Caco-2 (cell line): ENCODE measurements at regions of chr12 and their contacts with region 1.

Region 1: DNA sequence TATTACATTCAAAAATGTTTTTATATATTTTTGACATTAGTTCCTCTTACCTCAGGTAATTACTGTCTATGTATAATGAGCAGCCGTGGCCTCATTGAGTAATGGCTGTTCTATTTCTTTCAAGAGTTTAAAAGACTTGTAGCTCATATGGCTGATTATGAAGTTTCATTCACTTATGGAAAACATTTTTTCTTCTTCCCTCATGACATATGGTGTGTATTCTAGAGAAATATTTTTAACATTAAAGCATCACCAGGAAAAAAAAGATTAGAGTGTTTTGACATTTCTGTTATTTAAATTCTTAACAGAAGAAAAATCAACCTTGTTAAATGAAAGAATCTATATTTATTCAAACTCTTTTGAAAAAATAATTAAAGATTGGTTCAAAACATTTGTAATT is 422.4 kb downstream of the TMEM117 start:
- DNase-seq: no peak
- H3K4me3 ChIP-seq: no peak overlapping the region
- H3K4me3 Mint-ChIP-seq: no peak overlapping the region
- H3K27ac Mint-ChIP-seq: no peak overlapping the region
- H3K4me1 ChIP-seq: no peaks in the 10 kb centered on the region
- H3K4me1 Mint-ChIP-seq: no peaks in the 10 kb centered on the region
- H3K27me3 ChIP-seq: no peaks in the 10 kb centered on the region
- H3K27me3 Mint-ChIP-seq: no peaks in the 10 kb centered on the region
- CTCF ChIP-seq: no peak

Region 2: DNA sequence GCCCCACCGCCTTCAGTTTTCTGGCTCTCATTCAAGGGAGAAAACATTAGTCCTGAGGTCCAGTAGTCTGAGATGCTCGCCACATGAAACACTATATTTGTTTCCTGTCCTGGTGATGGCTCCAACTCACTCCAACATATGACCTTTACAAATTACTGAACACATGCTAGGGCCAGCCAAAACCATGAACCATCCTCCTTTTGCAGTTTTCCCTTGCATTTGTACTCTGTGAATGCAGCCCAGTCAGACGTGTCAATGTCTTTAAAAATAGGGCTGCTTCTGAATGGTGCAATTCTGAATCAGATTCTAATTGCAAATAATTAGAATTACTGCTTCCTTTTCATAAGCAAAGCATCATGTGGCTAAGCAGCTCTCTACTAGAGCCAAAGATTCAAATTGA is 742.2 kb before region 1 on chr12:
- CTCF ChIA-PET with region 1: no interaction called
- POLR2A ChIA-PET with region 1: no interaction called
- intact Hi-C with region 1: loop called (anchors 5 kb)
- DNase-seq: no peak
- H3K4me3 ChIP-seq: no peak overlapping the region
- H3K4me3 Mint-ChIP-seq: no peak overlapping the region
- H3K27ac Mint-ChIP-seq: no peak overlapping the region
- H3K4me1 ChIP-seq: no peaks in the 10 kb centered on the region
- H3K4me1 Mint-ChIP-seq: no peaks in the 10 kb centered on the region
- H3K27me3 ChIP-seq: no peaks in the 10 kb centered on the region
- H3K27me3 Mint-ChIP-seq: peaks cover under 1% of the 10 kb centered on the region
- CTCF ChIP-seq: no peak

Region 3: DNA sequence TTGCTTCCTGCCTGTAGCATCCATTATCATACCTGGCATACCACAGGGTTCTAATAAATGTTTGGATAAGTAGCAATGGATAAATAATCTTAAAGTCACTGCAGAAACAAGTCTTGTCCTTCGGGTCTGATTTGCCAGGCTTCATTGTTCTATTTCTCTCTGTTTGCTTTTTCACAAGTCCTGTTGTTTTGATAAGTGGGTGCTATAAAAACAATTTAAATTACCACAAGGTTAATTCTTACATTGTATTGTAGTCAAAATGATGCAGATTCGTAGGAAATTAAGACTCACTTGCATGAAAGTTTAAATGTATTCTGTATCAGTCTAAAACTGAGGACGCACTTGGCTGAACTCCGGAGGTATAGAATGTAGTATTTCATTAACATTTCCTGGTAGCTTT is 187.9 kb after region 1 on chr12:
- CTCF ChIA-PET with region 1: no interaction called
- POLR2A ChIA-PET with region 1: no interaction called
- intact Hi-C with region 1: loop called (anchors 5 kb)
- DNase-seq: no peak
- H3K4me3 ChIP-seq: no peak overlapping the region
- H3K4me3 Mint-ChIP-seq: no peak overlapping the region
- H3K27ac Mint-ChIP-seq: no peak overlapping the region
- H3K4me1 ChIP-seq: 0 out of 2 replicates have a peak, but pooled peaks cover 4% of the 10 kb centered on the region
- H3K4me1 Mint-ChIP-seq: no peaks in the 10 kb centered on the region
- H3K27me3 ChIP-seq: no peaks in the 10 kb centered on the region
- H3K27me3 Mint-ChIP-seq: no peaks in the 10 kb centered on the region
- CTCF ChIP-seq: no peak

Region 4: GRCh38 chr12:44889162-44889561 is 630.9 kb after region 1 on chr12:
- CTCF ChIA-PET with region 1: no interaction called
- POLR2A ChIA-PET with region 1: no interaction called
- intact Hi-C with region 1: no loop called
- DNase-seq: no peak
- H3K4me3 ChIP-seq: no peak overlapping the region
- H3K4me3 Mint-ChIP-seq: no peak overlapping the region
- H3K27ac Mint-ChIP-seq: no peak overlapping the region
- H3K4me1 ChIP-seq: no peaks in the 10 kb centered on the region
- H3K4me1 Mint-ChIP-seq: no peaks in the 10 kb centered on the region
- H3K27me3 ChIP-seq: no peaks in the 10 kb centered on the region
- H3K27me3 Mint-ChIP-seq: peaks cover 5% of the 10 kb centered on the region
- CTCF ChIP-seq: no peak